ENCODE measurements at regions of chr9 and their contacts with region 1.

Region 1: GRCh38 chr9:132780230-132781007 is 97.7 kb downstream of the AK8 start:
- DNase-seq: peak; percentile 52
- H3K4me3 ChIP-seq: no peak overlapping the region
- H3K27ac ChIP-seq: no peak overlapping the region
- H3K4me1 ChIP-seq: peaks cover 0 to 9% of the 10 kb centered on the region in 2 experiments; a peak in 1 of 4 replicates
- H3K27me3 ChIP-seq: no peaks in the 10 kb centered on the region; the same call in 1 of the 2 replicates
- CTCF ChIP-seq: no peak
- EP300 ChIP-seq: no peak
- RAD21 ChIP-seq: no peak

Region 2: GRCh38 chr9:132443951-132444607 is 336.3 kb before region 1 on chr9:
- CTCF ChIA-PET with region 1: no interaction called
- POLR2A ChIA-PET with region 1: no interaction called
- DNase-seq: peak; percentile 65
- H3K4me3 ChIP-seq: no peak overlapping the region
- H3K27ac ChIP-seq: no peak overlapping the region
- H3K4me1 ChIP-seq: peaks cover 0 to 8% of the 10 kb centered on the region in 2 experiments; a peak in 1 of 4 replicates
- H3K27me3 ChIP-seq: no peaks in the 10 kb centered on the region
- CTCF ChIP-seq: no peak
- EP300 ChIP-seq: no peak
- RAD21 ChIP-seq: no peak

Region 3: GRCh38 chr9:132768932-132769905 is 11.2 kb before region 1 on chr9:
- CTCF ChIA-PET with region 1: interaction called, 14 read pairs
- POLR2A ChIA-PET with region 1: interaction called, 6 read pairs
- DNase-seq: peak; percentile 68
- H3K4me3 ChIP-seq: no peak overlapping the region
- H3K27ac ChIP-seq: no peak overlapping the region
- H3K4me1 ChIP-seq: peaks cover 0 to 5% of the 10 kb centered on the region in 2 experiments; a peak in 1 of 4 replicates
- H3K27me3 ChIP-seq: no peaks in the 10 kb centered on the region
- CTCF ChIP-seq: no peak
- EP300 ChIP-seq: no peak
- RAD21 ChIP-seq: no peak